AG04450 (cell line): ENCODE measurements at regions of chr1 and their contacts with region 1.

Region 1: DNA sequence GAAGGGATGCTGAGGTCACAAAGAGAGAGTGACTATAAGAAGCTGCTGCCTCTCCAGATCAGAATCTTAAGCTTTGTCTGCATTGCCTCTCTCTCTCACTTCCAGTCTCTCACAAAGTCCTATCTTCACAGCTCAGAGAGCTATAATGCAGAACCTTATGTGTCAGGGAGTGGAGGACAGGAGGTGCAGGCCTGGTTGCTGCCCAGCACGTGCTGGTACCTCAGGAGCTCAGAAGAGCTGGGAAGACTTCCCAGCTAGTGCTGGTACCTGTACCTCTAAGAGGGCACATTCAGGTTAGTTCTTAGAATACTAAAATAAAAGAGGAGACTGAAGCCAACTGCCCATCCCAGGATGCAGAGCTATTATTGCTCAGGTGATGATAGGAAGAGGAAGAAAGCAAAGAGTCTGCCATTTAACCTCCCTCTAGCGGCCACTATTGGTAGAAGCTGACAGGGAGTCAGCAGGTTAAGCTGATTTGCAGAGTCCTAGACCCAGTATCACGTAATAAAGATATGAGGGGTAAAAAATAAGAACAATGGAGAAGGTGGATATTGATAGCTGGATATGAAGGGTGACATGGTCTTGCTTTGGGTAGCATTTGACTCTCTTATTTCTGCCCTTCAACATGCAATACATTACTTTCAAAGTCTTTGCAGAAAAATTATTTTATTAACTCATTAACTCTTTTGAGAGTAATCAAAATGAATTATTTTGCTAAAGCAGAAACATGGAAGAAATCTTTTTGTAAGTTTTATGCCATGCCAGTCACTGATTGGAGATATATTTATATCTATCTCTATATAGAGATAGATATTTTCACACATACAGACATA is 138.1 kb upstream of the HMCN1 start:
- DNase-seq: peak; percentile 6
- H3K4me3 ChIP-seq: no peak overlapping the region
- H3K27ac ChIP-seq: no peak overlapping the region
- H3K27me3 ChIP-seq: no peaks in the 10 kb centered on the region
- CTCF ChIP-seq: peak; percentile 83

Region 2: GRCh38 chr1:185238447-185238846 is 357.6 kb before region 1 on chr1:
- CTCF ChIA-PET with region 1: interaction called, 10 read pairs
- POLR2A ChIA-PET with region 1: no interaction called
- DNase-seq: no peak
- H3K4me3 ChIP-seq: no peak overlapping the region
- H3K27ac ChIP-seq: no peak overlapping the region
- H3K27me3 ChIP-seq: no peaks in the 10 kb centered on the region
- CTCF ChIP-seq: peak; percentile 56

Region 3: DNA sequence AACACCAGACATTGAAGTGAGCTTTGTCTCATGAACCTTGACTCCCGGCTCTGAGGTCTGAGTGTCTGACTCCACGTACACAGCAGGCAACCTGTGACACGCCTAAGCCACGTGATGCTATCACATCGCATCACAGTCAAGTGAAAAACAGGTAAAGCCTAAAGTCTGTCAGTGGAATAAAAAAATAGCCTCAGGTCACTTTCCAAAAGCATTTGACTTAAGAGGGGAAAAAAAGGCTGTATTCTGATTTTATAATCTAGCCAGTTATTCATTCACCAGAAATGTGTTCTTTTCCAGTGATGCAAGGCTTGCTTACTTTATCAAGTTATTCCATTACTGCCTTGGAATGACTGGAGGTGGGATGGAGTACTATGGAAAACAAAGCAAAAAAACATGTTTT is 25.1 kb before region 1 on chr1:
- CTCF ChIA-PET with region 1: interaction called, 15 read pairs
- POLR2A ChIA-PET with region 1: no interaction called
- DNase-seq: no peak
- H3K4me3 ChIP-seq: no peak overlapping the region
- H3K27ac ChIP-seq: no peak overlapping the region
- H3K27me3 ChIP-seq: no peaks in the 10 kb centered on the region
- CTCF ChIP-seq: no peak

Region 4: DNA sequence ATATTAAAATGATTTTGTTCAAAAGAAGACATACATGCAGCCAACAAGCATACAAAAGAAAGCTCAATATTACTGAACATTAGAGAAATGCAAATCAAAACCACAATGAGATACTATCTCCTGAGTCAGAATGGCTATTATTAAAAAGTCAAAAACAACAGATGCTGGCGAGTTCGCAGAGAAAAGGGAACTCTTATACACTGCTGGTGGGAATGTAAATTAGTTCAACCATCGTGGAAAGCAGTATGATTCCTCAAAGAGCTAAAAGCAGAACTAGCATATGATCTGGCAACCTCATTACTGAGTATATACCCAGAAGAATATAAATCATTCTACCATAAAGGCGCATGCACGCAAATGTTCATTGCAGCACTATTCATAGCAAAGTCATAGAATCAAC is 12.1 kb after region 1 on chr1:
- CTCF ChIA-PET with region 1: interaction called, 19 read pairs
- POLR2A ChIA-PET with region 1: no interaction called
- DNase-seq: no peak
- H3K4me3 ChIP-seq: no peak overlapping the region
- H3K27ac ChIP-seq: no peak overlapping the region
- H3K27me3 ChIP-seq: no peaks in the 10 kb centered on the region
- CTCF ChIP-seq: no peak

Region 5: GRCh38 chr1:185646202-185646683 is 50.2 kb after region 1 on chr1:
- CTCF ChIA-PET with region 1: interaction called, 10 read pairs
- POLR2A ChIA-PET with region 1: interaction called, 4 read pairs
- DNase-seq: peak; percentile 93
- H3K4me3 ChIP-seq: peak overlapping the region; percentile 21
- H3K27ac ChIP-seq: peak overlapping the region; percentile 47
- H3K27me3 ChIP-seq: no peaks in the 10 kb centered on the region
- CTCF ChIP-seq: no peak

Region 6: GRCh38 chr1:185795181-185795580 is 199.1 kb after region 1 on chr1:
- CTCF ChIA-PET with region 1: no interaction called
- POLR2A ChIA-PET with region 1: no interaction called
- DNase-seq: no peak
- H3K4me3 ChIP-seq: no peak overlapping the region
- H3K27ac ChIP-seq: no peak overlapping the region
- H3K27me3 ChIP-seq: no peaks in the 10 kb centered on the region
- CTCF ChIP-seq: no peak

Region 7: GRCh38 chr1:185821612-185822385 is 225.7 kb after region 1 on chr1:
- CTCF ChIA-PET with region 1: no interaction called
- POLR2A ChIA-PET with region 1: no interaction called
- DNase-seq: no peak
- H3K4me3 ChIP-seq: no peak overlapping the region
- H3K27ac ChIP-seq: no peak overlapping the region
- H3K27me3 ChIP-seq: no peaks in the 10 kb centered on the region
- CTCF ChIP-seq: peak; percentile 1; the same call in 1 of the 2 replicates